Aorta (tissue), 5 donors: ENCODE measurements at regions of chr2 and their contacts with region 1.

Region 1: DNA sequence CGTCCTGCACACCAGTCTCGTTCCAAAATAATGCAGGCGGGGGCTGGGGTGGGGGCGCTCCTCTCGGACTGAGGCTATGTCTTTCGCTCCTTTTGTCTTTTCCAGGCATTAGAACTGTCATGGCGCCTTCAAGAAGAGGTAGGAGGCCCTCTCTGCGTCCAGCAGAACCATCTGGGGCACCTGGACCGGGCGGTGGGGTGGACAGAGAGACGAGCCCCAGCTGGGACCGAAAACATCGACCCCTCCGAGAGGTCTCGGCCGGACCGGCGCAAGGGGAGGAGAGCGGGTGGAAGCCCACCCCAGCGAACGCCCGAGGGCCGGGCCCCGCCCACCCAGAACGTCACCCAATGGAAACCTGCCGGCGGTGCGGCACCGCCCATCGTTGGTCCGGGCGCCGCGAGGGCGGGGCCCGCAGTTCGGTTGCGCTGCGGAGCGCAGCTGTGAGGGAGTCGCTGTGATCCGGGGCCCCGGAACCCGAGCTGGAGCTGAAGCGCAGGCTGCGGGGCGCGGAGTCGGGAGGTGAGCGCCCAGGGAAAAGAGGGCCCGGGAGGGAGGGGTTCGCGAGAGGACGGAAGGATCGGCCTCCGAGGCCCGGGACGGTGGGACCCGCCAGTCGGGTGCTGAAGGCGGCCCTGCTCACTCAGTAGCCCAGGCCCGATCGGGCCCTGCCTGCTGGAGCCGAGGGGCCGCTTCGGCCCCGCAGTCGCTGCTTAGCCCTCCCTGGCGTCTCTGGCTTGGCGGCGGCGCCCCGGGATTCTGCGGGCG is at the start of gene NRBP1:
- DNase-seq: peak; percentile 94 to 97
- ATAC-seq: peak; percentile 98
- H3K4me3 ChIP-seq: peak within 1 kb of the TSS; percentile 61 to 83
- H3K27ac ChIP-seq: peak within 1 kb of the TSS; percentile 71 to 76
- H3K4me1 ChIP-seq: peaks cover 0 to 2% of the 10 kb centered on the region in 2 donors
- H3K27me3 ChIP-seq: no peaks in the 10 kb centered on the region
- total RNA-seq, gene NRBP1: 94.5 to 99.8 TPM

Region 2: GRCh38 chr2:27356382-27357181 is 71.8 kb before region 1 on chr2 and contains the start of gene GTF3C2:
- intact Hi-C with region 1: loop called in 1 of 2 experiments (anchors 2 kb)
- DNase-seq: peak; percentile 95 to 97
- ATAC-seq: peak; percentile 98
- H3K4me3 ChIP-seq: peak within 1 kb of the TSS; percentile 63 to 80
- H3K27ac ChIP-seq: peak within 1 kb of the TSS in 1 of 2 donors; percentile 55
- H3K4me1 ChIP-seq: no peaks in the 10 kb centered on the region
- H3K27me3 ChIP-seq: no peaks in the 10 kb centered on the region
- total RNA-seq, gene GTF3C2: 42.7 to 60.9 TPM

Region 3: DNA sequence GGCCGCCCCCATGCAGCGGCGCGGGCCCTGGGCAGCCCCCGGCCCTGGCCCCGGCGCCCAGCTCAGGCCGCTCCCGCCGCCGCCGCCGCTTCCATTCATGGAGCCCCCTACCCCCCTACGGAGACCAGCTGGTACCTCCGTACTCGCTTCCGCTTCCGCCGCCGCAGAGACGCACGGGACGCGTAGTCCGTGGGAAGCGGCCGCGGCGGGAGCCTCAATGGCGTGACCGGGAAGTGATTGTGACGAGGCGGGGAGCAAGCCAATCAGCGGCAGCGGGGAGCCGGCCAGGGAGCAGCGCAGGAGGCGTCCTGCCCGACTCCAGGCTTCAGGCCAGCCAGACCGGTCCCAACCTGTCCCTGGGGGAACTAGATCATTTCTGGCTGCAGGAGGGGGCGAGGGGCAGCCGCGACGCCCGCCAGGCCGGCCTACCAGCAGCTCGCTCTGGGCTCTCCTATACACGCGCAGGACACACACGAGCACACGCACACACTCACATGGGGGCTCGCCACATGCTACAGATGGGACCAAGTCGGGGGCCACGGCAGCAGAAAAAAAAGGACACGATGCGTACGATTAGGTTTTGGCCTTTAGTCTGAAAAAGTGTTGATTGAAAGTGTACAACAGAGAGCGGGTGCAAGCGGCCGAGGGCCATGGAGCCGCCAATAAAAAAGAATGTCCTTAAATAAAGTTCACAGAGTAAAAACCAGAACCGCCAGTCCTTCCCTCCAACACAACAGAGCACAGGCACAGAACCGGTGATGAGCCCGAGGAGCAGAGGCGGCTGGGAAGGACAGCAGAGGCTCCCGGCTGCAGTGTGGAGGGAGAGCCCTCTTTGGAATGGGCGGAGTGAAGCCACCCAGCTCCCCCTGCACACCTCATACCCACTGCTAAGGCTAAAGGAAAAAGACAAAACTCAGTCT is 47.5 kb before region 1 on chr2 and contains the start of gene ZNF513:
- intact Hi-C with region 1: loop called in 1 of 2 experiments (anchors 1 kb)
- DNase-seq: peak; percentile 98 to 99
- ATAC-seq: peak; percentile 94
- H3K4me3 ChIP-seq: peak within 1 kb of the TSS; percentile 77 to 88
- H3K27ac ChIP-seq: peak within 1 kb of the TSS; percentile 53 to 80
- H3K4me1 ChIP-seq: no peaks in the 10 kb centered on the region
- H3K27me3 ChIP-seq: no peaks in the 10 kb centered on the region
- total RNA-seq, gene ZNF513: 15.3 to 18.7 TPM

Region 4: DNA sequence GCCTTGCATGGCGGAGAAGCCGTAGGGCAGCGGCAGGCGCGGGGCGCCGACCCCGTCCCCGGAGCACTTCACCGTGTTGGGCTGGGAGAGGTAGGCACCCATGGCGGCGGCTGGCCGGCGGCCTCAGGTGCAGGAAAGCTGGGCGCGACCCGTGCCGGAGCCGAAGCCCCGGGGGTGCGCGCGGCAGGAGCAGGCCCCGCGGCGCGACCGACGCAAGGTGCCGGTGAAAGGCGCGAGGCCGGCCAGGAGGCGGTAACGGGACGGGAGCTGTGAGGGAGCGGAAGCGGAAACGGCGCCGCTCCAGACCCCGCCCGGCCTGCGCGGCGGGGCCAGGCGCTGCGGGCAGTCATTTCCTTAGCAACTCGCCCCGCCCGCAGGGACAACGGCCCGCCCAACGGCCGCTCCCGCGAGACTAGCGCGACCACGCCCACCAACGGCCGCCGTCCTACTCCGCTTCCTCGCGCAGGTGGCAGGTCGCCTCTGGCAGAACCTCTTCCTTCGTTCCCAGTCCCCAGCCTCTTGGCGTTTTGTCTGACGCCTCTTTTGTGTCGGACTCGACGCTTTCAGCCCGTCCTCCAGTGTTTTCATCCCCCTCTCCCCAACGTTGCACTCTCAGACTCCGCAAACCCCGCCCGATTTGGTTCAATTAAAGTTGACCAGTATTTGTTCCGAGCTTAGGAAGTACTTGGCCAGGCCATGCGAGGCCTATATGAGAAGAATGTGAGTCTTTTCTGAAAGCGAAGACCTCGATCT is 18.9 kb before region 1 on chr2 and contains the start of gene PPM1G:
- intact Hi-C with region 1: loop called (anchors 1 to 2 kb)
- DNase-seq: peak; percentile 96 to 99
- ATAC-seq: peak; percentile 99
- H3K4me3 ChIP-seq: peak within 1 kb of the TSS; percentile 48 to 86
- H3K27ac ChIP-seq: peak within 1 kb of the TSS in 1 of 2 donors; percentile 36
- H3K4me1 ChIP-seq: peaks cover 0 to 3% of the 10 kb centered on the region in 2 donors
- H3K27me3 ChIP-seq: no peaks in the 10 kb centered on the region
- total RNA-seq, gene PPM1G: 39.5 to 42.7 TPM

Region 5: DNA sequence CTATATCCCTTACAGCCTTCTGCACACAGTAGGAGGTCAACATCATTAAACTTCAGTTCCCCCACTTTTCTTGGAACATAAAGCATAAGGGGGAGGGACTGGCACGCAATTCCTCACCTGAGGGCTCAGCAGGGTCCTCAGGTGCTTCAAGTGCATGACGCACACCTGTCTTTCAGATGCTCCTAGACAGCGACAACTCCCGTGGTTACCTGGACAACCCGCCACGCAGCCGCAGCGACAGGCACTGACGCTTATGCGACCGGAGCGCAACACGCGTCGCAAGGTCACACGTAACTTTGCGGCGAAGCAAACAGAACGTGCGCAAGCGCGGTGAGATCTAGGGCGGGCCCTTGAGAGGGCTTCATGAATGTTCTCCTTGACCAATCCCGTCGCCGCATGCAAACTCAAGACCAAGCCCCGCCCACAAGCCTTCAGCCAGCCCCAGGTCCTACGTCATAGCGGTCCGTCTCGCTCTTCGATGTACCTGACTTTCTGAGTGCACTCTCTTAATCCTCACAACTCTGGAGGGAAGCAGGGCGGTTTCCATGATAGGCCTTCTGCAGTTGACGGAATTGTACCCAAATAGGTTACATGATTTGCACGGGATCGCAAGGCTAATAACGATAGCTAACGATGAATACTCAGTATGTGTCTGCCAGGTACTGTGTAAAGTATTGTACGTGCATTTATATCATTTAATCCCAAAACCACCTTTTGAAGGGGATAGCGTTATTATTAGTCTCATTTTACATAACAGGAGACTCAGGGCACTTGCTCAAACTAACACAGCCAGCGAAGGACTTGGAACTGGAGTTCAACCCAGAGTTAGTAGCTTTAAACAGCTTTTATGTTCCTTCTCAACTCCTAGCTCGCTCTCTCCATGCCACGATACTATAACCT is 61.4 kb after region 1 on chr2 and contains the start of gene IFT172:
- intact Hi-C with region 1: loop called in 1 of 2 experiments (anchors 5 kb)
- DNase-seq: peak; percentile 99
- ATAC-seq: peak; percentile 96
- H3K4me3 ChIP-seq: peak within 1 kb of the TSS; percentile 48 to 60
- H3K27ac ChIP-seq: peak within 1 kb of the TSS in 1 of 2 donors; percentile 39
- H3K4me1 ChIP-seq: no peaks in the 10 kb centered on the region
- H3K27me3 ChIP-seq: no peaks in the 10 kb centered on the region
- total RNA-seq, gene IFT172: 24.8 to 45.7 TPM